Kidney (tissue), 22 donors: ENCODE measurements at regions of chr1 and their contacts with region 1.

Region 1: GRCh38 chr1:94863919-94864318 is 43.8 kb downstream of the SLC44A3 start:
- DNase-seq: peak in 3 of 5 donors; percentile 29 to 89 (median 71)
- H3K4me3 ChIP-seq: peak overlapping the region in 1 of 3 donors; percentile 20
- H3K27ac ChIP-seq: peak overlapping the region; percentile 92 to 98
- H3K4me1 ChIP-seq: peaks cover 13 to 51% (median 32%) of the 10 kb centered on the region in 3 donors
- H3K27me3 ChIP-seq: no peaks in the 10 kb centered on the region
- CTCF ChIP-seq: no peak

Region 2: GRCh38 chr1:94926915-94927404 is 63.0 kb after region 1 on chr1 and contains the start of gene CNN3:
- intact Hi-C with region 1: loop called (anchors 10 kb)
- DNase-seq: peak; percentile 94 to 98 (median 96)
- H3K4me3 ChIP-seq: peak within 1 kb of the TSS; percentile 91 to 98 (median 96)
- H3K27ac ChIP-seq: peak within 1 kb of the TSS; percentile 99
- H3K4me1 ChIP-seq: peaks cover 3 to 42% (median 18%) of the 10 kb centered on the region in 3 donors
- H3K27me3 ChIP-seq: no peaks in the 10 kb centered on the region
- CTCF ChIP-seq: peak; percentile 11
- total RNA-seq, gene CNN3: 291 TPM

Region 3: GRCh38 chr1:94936861-94937620 is 73.1 kb after region 1 on chr1:
- intact Hi-C with region 1: no loop called
- DNase-seq: no peak
- H3K4me3 ChIP-seq: no peak overlapping the region
- H3K27ac ChIP-seq: peak overlapping the region; percentile 68 to 71
- H3K4me1 ChIP-seq: peaks cover 3 to 41% (median 17%) of the 10 kb centered on the region in 3 donors
- H3K27me3 ChIP-seq: no peaks in the 10 kb centered on the region
- CTCF ChIP-seq: no peak